CD14-positive monocyte (primary cell): ENCODE measurements at regions of chr16 and their contacts with region 1.

Region 1: DNA sequence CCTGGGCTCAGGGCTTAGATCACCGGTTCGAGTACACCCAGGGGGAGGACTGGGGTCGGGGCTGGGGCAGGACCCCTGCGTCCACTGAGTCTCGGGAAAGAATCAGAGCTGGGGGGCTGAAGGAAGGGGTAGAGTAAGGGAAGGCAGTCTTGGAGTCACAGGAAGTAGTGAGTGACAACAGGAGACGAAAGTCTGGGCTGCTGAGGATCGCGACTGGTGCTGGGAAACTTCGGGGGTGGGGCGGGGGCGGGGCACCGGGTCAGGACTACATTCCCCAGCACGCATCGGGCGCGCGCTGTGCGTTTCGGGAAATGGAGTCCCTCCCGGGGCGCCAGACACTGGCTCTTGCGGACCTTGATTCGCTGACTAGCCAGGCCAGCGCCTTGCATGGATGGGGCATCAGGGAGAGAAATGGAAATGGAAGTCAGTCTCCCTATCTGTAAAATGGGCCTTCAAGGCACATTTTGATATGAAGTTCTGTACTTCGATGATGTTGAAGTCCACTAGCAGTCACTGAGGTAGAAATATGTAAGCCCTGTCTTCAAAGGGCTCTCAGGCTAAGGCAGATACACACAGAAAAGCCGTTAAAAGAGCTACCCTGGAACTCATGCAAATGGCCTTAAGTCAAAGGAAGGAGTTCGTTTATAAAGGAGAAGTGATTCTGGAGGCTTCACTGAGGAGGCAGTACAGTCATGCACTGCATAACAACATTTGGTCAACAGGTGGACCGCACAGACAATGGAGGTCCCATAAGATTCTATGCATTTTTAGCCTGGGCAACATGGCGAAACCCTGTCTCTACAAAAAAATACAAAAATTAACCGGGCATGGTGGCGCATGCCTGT is 697 bp downstream of the CTF1 start:
- DNase-seq: peak; percentile 79 to 86 (median 82)
- H3K4me3 ChIP-seq: peak overlapping the region; percentile 37 to 88 (median 50)
- H3K4me3 Mint-ChIP-seq: peak overlapping the region; percentile 85 to 92
- H3K27ac ChIP-seq: peak overlapping the region; percentile 58 to 77
- H3K27ac Mint-ChIP-seq: peak overlapping the region; percentile 80 to 96 (median 90)
- H3K4me1 ChIP-seq: peaks cover 47 to 60% of the 10 kb centered on the region in 2 donors
- H3K4me1 Mint-ChIP-seq: peaks cover 56% of the 10 kb centered on the region
- H3K27me3 ChIP-seq: no peaks in the 10 kb centered on the region
- H3K27me3 Mint-ChIP-seq: peaks cover 0 to 5% (median 0%) of the 10 kb centered on the region in 3 donors
- CTCF ChIP-seq: no peak

Region 2: DNA sequence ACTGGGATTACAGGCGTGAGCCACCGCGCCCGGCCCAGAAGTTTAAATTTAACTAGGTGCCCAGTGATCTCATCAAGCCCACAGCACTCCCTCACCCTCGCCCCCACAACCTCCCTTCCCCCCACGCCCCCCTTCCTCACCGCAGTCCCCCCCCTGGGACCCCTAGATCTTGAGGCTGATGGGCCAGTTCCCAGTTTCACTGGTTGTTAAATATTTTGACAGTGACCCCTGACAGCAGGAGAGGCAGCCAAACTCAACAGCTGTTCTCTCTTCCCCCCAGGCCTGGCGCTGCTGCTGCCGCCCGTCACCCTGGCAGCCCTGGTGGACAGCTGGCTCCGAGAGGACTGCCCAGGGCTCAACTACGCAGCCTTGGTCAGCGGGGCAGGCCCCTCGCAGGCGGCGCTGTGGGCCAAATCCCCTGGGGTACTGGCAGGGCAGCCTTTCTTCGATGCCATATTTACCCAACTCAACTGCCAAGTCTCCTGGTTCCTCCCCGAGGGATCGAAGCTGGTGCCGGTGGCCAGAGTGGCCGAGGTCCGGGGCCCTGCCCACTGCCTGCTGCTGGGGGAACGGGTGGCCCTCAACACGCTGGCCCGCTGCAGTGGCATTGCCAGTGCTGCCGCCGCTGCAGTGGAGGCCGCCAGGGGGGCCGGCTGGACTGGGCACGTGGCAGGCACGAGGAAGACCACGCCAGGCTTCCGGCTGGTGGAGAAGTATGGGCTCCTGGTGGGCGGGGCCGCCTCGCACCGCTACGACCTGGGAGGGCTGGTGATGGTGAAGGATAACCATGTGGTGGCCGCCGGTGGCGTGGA is 1202.5 kb before region 1 on chr16:
- intact Hi-C with region 1: no loop called
- DNase-seq: no peak
- H3K4me3 ChIP-seq: no peak overlapping the region
- H3K4me3 Mint-ChIP-seq: no peak overlapping the region
- H3K27ac ChIP-seq: no peak overlapping the region
- H3K27ac Mint-ChIP-seq: peak overlapping the region in 1 of 7 donors; percentile 25
- H3K4me1 ChIP-seq: peaks cover 6 to 8% of the 10 kb centered on the region in 2 donors
- H3K4me1 Mint-ChIP-seq: peaks cover 12% of the 10 kb centered on the region
- H3K27me3 ChIP-seq: no peaks in the 10 kb centered on the region
- H3K27me3 Mint-ChIP-seq: peaks cover 4 to 5% (median 5%) of the 10 kb centered on the region in 3 donors
- CTCF ChIP-seq: no peak

Region 3: DNA sequence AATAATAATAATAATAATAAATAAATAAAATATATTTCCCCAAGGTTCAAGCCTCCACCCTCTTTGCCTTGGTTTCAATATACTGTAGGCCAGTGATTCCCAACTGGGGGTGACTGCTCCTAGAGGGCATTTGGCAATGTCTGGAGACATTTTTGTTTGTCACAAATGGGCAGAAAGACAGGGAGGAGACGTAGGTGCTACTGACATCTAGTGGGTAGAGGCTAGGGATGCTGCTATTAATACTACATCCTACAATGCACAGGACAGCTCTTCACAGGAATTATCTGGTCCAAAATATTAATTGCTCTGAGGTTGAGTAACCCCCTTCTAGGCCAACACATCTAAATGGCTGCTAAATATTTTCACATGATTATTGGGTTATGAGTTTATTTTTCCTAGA is 259.2 kb before region 1 on chr16:
- intact Hi-C with region 1: no loop called
- DNase-seq: peak; percentile 47 to 69 (median 61)
- H3K4me3 ChIP-seq: no peak overlapping the region
- H3K4me3 Mint-ChIP-seq: no peak overlapping the region
- H3K27ac ChIP-seq: no peak overlapping the region
- H3K27ac Mint-ChIP-seq: peak overlapping the region in 1 of 7 donors; percentile 70
- H3K4me1 ChIP-seq: peaks cover 12 to 17% of the 10 kb centered on the region in 2 donors
- H3K4me1 Mint-ChIP-seq: peaks cover 12% of the 10 kb centered on the region
- H3K27me3 ChIP-seq: no peaks in the 10 kb centered on the region
- H3K27me3 Mint-ChIP-seq: peaks cover 0 to 3% (median 2%) of the 10 kb centered on the region in 3 donors
- CTCF ChIP-seq: peak; percentile 47

Region 4: GRCh38 chr16:30874821-30875717 is 22.0 kb before region 1 on chr16:
- intact Hi-C with region 1: loop called in 1 of 2 experiments (anchors 2 kb)
- DNase-seq: peak; percentile 79 to 85 (median 81)
- H3K4me3 ChIP-seq: peak overlapping the region; percentile 81 to 91 (median 82)
- H3K4me3 Mint-ChIP-seq: peak overlapping the region; percentile 92 to 93
- H3K27ac ChIP-seq: peak overlapping the region; percentile 72 to 90
- H3K27ac Mint-ChIP-seq: peak overlapping the region; percentile 89 to 98 (median 95)
- H3K4me1 ChIP-seq: peaks cover 20 to 31% of the 10 kb centered on the region in 2 donors
- H3K4me1 Mint-ChIP-seq: peaks cover 26% of the 10 kb centered on the region
- H3K27me3 ChIP-seq: no peaks in the 10 kb centered on the region
- H3K27me3 Mint-ChIP-seq: peaks cover 0 to 1% (median 0%) of the 10 kb centered on the region in 3 donors
- CTCF ChIP-seq: no peak